ENCODE measurements at regions of chr1 and their contacts with region 1.

Region 1: DNA sequence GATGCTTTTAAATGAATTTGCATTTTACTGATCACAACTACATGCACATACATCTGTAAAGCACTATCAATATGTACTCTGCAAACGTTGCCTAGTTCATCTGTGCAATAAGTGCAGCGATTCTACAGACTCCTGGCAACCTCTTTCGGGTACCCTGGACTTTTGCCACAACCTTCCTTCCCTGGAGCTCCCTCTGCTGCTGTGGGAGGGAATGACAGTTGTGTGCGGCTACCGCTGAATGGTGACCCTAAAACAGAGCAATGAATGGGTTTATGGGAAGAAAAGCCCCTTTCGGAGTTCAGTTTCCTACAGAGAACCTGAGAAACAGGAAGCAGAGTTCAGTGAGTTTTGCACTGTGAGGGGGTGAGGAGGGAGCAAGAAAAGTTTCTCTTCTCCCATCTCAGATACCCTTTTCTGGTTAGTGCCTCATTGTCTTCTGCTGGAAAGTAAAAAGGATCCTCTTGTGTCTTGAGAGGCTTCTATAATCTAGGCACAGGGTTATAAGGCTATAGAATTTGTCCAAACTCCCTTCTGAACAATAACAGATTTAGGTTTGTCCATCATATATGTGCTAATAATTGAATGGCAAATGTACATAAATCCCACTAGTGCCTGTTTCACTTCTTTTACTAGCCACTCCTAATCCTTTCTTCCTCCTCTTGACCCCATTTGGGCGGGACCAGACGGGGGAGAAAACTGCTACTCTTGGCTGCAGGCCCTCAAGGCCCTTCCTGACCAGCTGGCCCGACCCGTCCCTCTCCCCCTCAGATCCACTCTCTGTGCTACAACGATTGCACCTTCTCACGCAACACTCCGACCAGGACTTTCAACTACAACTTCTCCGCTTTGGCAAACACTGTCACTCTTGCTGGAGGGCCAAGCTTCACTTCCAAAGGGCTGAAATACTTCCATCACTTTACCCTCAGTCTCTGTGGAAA is 19.8 kb upstream of the SARS1 start:
- DNase-seq: peak in 6 of 7 donors; percentile 26 to 77 (median 63)
- H3K4me3 ChIP-seq: no peak overlapping the region
- H3K27ac ChIP-seq: no peak overlapping the region
- H3K4me1 ChIP-seq: peaks cover 15 to 17% of the 10 kb centered on the region in 2 donors
- H3K27me3 ChIP-seq: no peaks in the 10 kb centered on the region
- CTCF ChIP-seq: peak; percentile 28 to 55 (median 43)
- POLR2A ChIP-seq: no peak

Region 2: DNA sequence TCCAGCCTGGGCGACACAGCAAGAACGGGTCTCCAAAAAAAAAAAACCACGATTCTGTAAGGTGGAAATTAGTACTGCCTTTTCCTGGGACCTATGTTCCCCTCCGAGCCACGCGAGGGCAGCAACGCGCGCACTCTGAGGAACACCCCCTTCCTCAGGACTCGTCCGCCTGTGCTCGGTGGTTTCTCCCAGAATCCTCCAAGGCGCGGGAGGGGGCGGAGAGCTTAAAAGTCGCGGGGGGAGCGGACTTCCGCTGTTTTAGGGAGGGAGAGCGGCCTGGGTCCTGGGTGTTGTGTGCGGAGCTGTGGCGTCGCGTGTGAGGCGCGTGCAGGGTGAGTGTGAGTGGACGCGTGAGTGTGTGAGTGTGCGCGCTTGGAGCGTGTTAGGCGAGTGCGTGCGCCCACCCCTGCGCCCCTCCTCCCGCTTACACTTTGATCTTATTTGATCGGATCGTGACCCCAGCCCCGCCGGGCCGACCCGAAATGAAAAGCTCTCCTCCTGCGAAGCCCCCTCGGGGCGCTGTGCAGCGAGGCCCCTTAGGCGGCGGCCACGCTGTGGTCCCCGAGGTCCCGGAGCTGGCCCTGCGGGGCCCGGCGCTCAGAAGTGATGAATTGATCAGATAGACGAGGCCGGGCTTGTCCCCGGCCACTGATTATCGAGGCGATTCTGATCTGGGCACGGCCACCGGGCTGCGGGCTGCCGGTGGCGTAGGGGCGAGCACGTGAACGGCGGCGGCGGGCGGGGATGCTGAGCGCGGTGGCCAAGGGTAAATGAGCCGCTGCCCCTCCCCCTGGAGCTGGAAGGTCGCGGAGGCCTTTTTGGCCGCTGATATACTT is 93.8 kb before region 1 on chr1:
- intact Hi-C with region 1: loop called in 1 of 2 experiments (anchors 5 kb)
- DNase-seq: peak; percentile 96 to 98 (median 98)
- H3K4me3 ChIP-seq: peak overlapping the region; percentile 26 to 95 (median 82)
- H3K27ac ChIP-seq: peak overlapping the region; percentile 80 to 99 (median 94)
- H3K4me1 ChIP-seq: peaks cover 3 to 12% of the 10 kb centered on the region in 2 donors
- H3K27me3 ChIP-seq: no peaks in the 10 kb centered on the region
- CTCF ChIP-seq: peak; percentile 66 to 90 (median 82)
- POLR2A ChIP-seq: peak; percentile 95 to 97